Caco-2 (cell line): ENCODE measurements at regions of chr1 and their contacts with region 1.

Region 1: DNA sequence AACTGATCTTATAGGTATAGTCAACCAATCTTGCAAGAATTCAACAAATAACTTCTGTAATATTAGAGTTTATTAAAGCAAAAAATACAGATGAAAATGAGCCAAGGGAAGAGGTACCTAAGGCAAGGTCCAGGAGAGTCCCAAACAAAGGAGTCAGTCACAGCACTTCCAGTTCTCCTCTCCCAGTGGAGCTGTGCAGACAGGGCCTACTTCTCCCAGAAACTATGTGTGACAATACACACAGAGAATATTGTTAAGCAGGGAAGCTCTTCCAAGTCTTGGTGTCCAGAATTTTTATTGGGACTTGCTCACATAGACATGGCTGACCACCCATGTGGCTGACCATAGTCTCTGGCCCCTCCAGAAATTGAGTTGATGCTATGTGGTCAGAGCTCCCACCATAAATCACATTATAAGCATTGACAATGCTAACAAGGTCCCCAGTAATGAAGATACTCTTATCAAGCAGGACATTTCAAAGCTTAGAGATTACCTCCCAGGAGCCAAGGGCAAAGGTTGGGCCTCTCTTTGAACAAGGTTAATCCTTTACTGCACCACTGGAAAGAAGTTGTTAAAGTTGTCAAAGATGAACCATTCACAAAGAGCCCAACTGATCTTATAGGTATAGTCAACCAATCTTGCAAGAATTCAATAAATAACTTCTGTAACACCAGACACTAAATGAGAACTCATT is 3.5 kb upstream of the CD244 start:
- DNase-seq: peak; percentile 64 to 81
- H3K4me3 ChIP-seq: no peak overlapping the region
- H3K4me3 Mint-ChIP-seq: peak overlapping the region; percentile 25
- H3K27ac Mint-ChIP-seq: peak overlapping the region; percentile 55
- H3K4me1 ChIP-seq: peaks cover 46% of the 10 kb centered on the region
- H3K4me1 Mint-ChIP-seq: peaks cover 41% of the 10 kb centered on the region
- H3K27me3 ChIP-seq: no peaks in the 10 kb centered on the region
- H3K27me3 Mint-ChIP-seq: no peaks in the 10 kb centered on the region
- CTCF ChIP-seq: no peak

Region 2: DNA sequence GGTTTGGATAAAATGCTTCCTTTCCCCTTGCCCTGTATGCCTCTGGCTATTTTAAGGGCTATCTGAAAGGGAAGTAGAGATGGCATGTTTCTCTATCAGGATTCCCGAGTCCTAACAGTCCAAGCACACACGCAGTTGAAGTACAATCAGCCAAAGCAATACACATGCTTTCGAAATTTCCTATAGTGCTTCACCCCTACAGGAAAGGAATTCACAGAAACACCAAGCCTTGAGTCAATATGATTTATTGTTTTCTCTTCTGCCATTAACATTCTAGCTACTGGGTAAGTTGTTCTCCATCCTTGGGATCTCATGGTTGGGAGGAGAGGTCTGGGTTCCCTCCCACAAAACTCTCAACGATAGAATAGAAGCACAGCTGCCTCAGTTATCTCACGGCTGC is 10.2 kb after region 1 on chr1:
- CTCF ChIA-PET with region 1: no interaction called
- POLR2A ChIA-PET with region 1: no interaction called
- intact Hi-C with region 1: loop called (anchors 1 kb)
- DNase-seq: no peak
- H3K4me3 ChIP-seq: no peak overlapping the region
- H3K4me3 Mint-ChIP-seq: no peak overlapping the region
- H3K27ac Mint-ChIP-seq: no peak overlapping the region
- H3K4me1 ChIP-seq: peaks cover 18% of the 10 kb centered on the region
- H3K4me1 Mint-ChIP-seq: peaks cover 30% of the 10 kb centered on the region
- H3K27me3 ChIP-seq: no peaks in the 10 kb centered on the region
- H3K27me3 Mint-ChIP-seq: no peaks in the 10 kb centered on the region
- CTCF ChIP-seq: no peak

Region 3: GRCh38 chr1:160884579-160884978 is 18.4 kb after region 1 on chr1:
- CTCF ChIA-PET with region 1: no interaction called
- POLR2A ChIA-PET with region 1: no interaction called
- intact Hi-C with region 1: loop called (anchors 1 kb)
- DNase-seq: peak; percentile 32 to 59
- H3K4me3 ChIP-seq: no peak overlapping the region
- H3K4me3 Mint-ChIP-seq: no peak overlapping the region
- H3K27ac Mint-ChIP-seq: peak overlapping the region; percentile 21
- H3K4me1 ChIP-seq: no peaks in the 10 kb centered on the region
- H3K4me1 Mint-ChIP-seq: peaks cover 7% of the 10 kb centered on the region
- H3K27me3 ChIP-seq: no peaks in the 10 kb centered on the region
- H3K27me3 Mint-ChIP-seq: no peaks in the 10 kb centered on the region
- CTCF ChIP-seq: peak; percentile 56 to 62

Region 4: GRCh38 chr1:160911441-160911840 is 45.3 kb after region 1 on chr1:
- CTCF ChIA-PET with region 1: no interaction called
- POLR2A ChIA-PET with region 1: interaction called, 4 read pairs
- intact Hi-C with region 1: loop called (anchors 1 kb)
- DNase-seq: peak; percentile 72 to 88
- H3K4me3 ChIP-seq: no peak overlapping the region
- H3K4me3 Mint-ChIP-seq: peak overlapping the region; percentile 4
- H3K27ac Mint-ChIP-seq: peak overlapping the region; percentile 54
- H3K4me1 ChIP-seq: peaks cover 28% of the 10 kb centered on the region
- H3K4me1 Mint-ChIP-seq: peaks cover 13% of the 10 kb centered on the region
- H3K27me3 ChIP-seq: no peaks in the 10 kb centered on the region
- H3K27me3 Mint-ChIP-seq: no peaks in the 10 kb centered on the region
- CTCF ChIP-seq: no peak